Activated T-helper 2 cell treated with anti-CD3 and anti-CD28 coated beads, Interferon-gamma antibody, Interleukin-2, Interleukin-4, amounts not matched to agents 10 μg/mL and 5 μg/mL and 100 μg/mL, durations not matched to agents 14 hours and 24 hours and 36 hours (primary cell): ENCODE measurements at regions of chr11 and their contacts with region 1.

Region 1: DNA sequence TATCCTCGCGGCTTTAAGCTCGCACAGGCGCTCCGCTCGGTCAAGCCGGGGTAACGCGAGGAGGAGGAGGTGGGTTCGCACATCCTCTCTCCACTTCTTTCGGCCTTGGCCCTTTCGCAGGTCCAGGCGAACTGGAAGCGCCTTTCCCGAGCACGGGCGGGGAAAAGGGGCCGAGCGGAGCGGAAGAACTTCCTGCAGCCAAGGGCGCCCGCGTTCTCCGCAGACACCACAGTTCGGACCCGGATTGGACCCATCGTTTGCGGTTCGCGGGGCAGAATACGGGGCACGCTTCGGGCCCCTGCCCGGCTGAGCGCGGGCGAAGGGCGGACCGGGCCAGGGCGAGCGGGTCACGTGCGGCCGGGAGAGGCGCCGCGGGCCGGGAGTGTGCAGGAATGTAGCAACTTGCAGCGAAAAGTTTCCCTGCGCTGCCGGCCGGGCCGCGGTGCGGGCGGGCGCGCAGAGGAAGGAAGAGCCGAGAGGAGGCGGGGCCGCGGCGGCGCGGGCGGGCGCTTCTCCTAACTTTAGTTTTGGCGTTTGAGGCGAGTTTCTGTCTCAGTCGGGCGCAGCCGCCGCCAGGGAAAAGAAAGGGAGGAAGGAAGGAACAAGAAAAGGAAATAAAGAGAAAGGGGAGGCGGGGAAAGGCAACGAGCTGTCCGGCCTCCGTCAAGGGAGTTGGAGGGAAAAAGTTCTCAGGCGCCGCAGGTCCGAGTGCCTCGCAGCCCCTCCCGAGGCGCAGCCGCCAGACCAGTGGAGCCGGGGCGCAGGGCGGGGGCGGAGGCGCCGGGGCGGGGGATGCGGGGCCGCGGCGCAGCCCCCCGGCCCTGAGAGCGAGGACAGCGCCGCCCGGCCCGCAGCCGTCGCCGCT is at the start of gene YAP1:
- DNase-seq: peak; percentile 59
- H3K4me3 Mint-ChIP-seq: peak within 1 kb of the TSS; percentile 89
- H3K27ac Mint-ChIP-seq: peak within 1 kb of the TSS; percentile 30
- H3K4me1 Mint-ChIP-seq: peaks cover 10% of the 10 kb centered on the region
- H3K27me3 Mint-ChIP-seq: peaks cover 51% of the 10 kb centered on the region
- total RNA-seq, gene YAP1: not detected in 2 replicates

Region 2: DNA sequence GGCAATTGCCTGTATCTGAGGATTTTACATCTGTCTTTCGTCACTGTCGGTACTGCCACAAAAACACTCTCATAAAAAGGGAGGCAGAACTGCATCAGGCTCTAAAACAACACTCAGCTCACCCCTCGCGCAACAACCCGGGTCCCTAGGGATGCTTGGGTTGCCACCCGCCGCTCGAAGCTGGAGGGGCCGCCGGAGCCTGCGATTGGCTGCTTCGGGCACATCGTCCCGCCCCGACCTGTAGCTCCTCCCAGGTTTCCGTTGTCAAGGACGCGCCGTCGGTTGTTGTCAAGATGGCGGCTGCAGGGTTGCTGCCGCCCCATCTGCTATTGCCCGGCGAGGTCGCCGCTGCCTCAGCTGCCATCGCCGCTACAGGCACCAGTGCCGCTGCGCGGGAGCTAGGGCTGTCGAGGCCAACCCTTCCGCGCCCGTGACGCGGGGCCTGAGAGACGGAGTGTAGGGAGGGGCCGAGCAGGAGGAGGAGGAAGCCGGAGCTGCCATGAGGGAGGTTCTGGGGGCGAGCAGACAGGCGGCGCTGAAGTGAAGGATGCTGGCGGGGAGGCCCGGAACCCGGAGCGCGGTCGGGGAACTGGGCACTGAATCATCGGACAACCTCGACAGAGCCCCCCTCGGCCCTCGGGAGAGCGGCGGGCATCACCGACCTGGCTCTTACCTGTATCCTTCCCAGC is 195.2 kb before region 1 on chr11 and contains the start of gene CEP126:
- intact Hi-C with region 1: loop called (anchors 2 kb)
- DNase-seq: peak; percentile 89
- H3K4me3 Mint-ChIP-seq: peak within 1 kb of the TSS; percentile 88
- H3K27ac Mint-ChIP-seq: peak within 1 kb of the TSS; percentile 43
- H3K4me1 Mint-ChIP-seq: peaks cover 17% of the 10 kb centered on the region
- H3K27me3 Mint-ChIP-seq: peaks cover 4% of the 10 kb centered on the region
- total RNA-seq, gene CEP126: 0.67 and 1.1 TPM in 2 replicates

Region 3: GRCh38 chr11:101960216-101960615 is 149.9 kb before region 1 on chr11:
- intact Hi-C with region 1: no loop called
- DNase-seq: no peak
- H3K4me3 Mint-ChIP-seq: no peak overlapping the region
- H3K27ac Mint-ChIP-seq: no peak overlapping the region
- H3K4me1 Mint-ChIP-seq: no peaks in the 10 kb centered on the region
- H3K27me3 Mint-ChIP-seq: no peaks in the 10 kb centered on the region

Region 4: GRCh38 chr11:102139081-102139498 is 29.0 kb after region 1 on chr11:
- intact Hi-C with region 1: no loop called
- DNase-seq: no peak
- H3K4me3 Mint-ChIP-seq: no peak overlapping the region
- H3K27ac Mint-ChIP-seq: no peak overlapping the region
- H3K4me1 Mint-ChIP-seq: no peaks in the 10 kb centered on the region
- H3K27me3 Mint-ChIP-seq: peaks cover 2% of the 10 kb centered on the region

Region 5: GRCh38 chr11:103024086-103024485 is 914.0 kb after region 1 on chr11:
- intact Hi-C with region 1: loop called (anchors 10 kb)
- DNase-seq: no peak
- H3K4me3 Mint-ChIP-seq: no peak overlapping the region
- H3K27ac Mint-ChIP-seq: no peak overlapping the region
- H3K4me1 Mint-ChIP-seq: peaks cover 12% of the 10 kb centered on the region
- H3K27me3 Mint-ChIP-seq: peaks cover 10% of the 10 kb centered on the region